Ascending aorta (tissue), 2 donors: ENCODE measurements at regions of chr11 and their contacts with region 1.

Region 1: GRCh38 chr11:119323538-119324033 is 6.7 kb upstream of the MCAM start:
- DNase-seq: peak in 1 of 2 donors; percentile 89
- H3K4me3 ChIP-seq: no peak overlapping the region
- H3K27ac ChIP-seq: peak overlapping the region in 1 of 2 donors; percentile 98
- H3K4me1 ChIP-seq: peaks cover 6 to 31% of the 10 kb centered on the region in 2 donors
- H3K27me3 ChIP-seq: no peaks in the 10 kb centered on the region
- CTCF ChIP-seq: peak; percentile 71 to 78 (median 76)

Region 2: DNA sequence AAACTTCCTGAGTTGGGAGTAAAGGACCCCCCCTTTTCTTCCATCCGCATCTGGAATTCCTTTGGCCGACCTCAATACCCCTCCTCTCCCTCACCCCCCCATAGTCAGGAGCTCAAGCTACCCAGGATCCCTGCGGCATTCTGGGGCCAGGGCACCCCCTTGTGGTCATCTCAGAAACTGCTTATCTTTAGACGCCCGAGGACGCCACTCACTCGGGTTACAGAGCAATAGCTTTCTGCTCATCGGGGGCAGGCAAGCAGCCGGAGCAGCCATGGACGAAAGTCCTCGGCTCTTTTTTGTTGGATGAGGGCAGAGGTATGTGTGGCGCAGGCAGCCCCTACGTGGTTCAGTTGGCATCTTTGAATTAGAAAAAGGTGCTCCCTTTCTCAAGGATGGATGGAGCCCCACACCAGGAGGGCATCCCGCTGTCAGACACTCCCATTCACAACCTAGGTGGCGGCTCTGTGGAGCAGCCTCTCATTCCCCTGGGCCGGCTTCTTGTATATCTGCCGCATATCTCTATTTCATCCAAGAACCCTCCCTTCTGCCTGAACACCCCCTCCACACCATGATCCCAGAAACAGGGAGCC is 14.8 kb after region 1 on chr11:
- intact Hi-C with region 1: loop called (anchors 2 kb)
- DNase-seq: peak in 1 of 2 donors; percentile 87
- H3K4me3 ChIP-seq: peak overlapping the region in 1 of 2 donors; percentile 94
- H3K27ac ChIP-seq: peak overlapping the region; percentile 88 to 96
- H3K4me1 ChIP-seq: peaks cover 13 to 38% of the 10 kb centered on the region in 2 donors
- H3K27me3 ChIP-seq: no peaks in the 10 kb centered on the region
- CTCF ChIP-seq: peak; percentile 75 to 88 (median 86)

Region 3: DNA sequence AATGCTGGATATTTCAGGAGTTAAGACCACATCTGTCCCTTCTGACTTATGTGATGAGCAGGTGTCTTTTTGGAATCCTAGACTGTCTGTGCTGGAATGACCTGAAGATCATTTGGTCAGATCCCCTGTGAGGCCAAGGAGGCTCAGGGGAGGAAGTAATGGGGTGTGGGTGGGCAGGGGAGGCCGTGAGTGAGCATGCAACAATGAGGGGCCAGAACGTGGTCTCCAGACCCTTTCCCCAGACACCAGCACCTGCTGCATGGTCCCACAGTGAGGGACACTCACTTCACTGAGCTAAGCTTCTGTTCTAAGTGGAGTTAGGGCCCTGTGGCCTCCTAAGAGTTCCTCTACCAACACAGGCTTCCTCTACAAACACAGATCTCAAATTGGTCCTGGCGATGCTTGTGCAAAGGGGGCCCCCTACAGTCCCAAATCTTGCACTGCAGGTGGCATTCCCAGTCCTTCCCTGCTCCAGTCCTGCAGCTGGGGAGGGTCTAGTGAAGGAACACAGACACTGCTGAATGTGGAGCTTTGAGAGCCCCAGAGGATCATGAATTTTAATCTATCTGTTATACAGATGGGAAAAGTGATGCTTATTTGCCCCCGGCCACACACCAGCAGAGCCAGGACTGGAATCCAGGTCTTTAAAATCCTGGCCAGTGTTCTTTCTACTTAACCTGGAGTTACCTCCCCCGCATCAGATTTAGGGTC is 50.5 kb after region 1 on chr11:
- intact Hi-C with region 1: no loop called
- DNase-seq: peak in 1 of 2 donors; percentile 89
- H3K4me3 ChIP-seq: no peak overlapping the region
- H3K27ac ChIP-seq: no peak overlapping the region
- H3K4me1 ChIP-seq: peaks cover 5 to 15% of the 10 kb centered on the region in 2 donors
- H3K27me3 ChIP-seq: no peaks in the 10 kb centered on the region
- CTCF ChIP-seq: peak; percentile 82 to 85 (median 84)

Region 4: GRCh38 chr11:119843877-119844276 is 520.3 kb after region 1 on chr11:
- intact Hi-C with region 1: no loop called
- DNase-seq: no peak
- H3K4me3 ChIP-seq: no peak overlapping the region
- H3K27ac ChIP-seq: no peak overlapping the region
- H3K4me1 ChIP-seq: no peaks in the 10 kb centered on the region
- H3K27me3 ChIP-seq: no peaks in the 10 kb centered on the region
- CTCF ChIP-seq: no peak